MCF 10A (cell line): ENCODE measurements at regions of chr3 and their contacts with region 1.

Region 1: GRCh38 chr3:2921903-2922302 is 188.3 kb downstream of the IL5RA start:
- DNase-seq: peak; percentile 41
- H3K4me3 Mint-ChIP-seq: no peak overlapping the region
- H3K27ac Mint-ChIP-seq: no peak overlapping the region
- H3K4me1 Mint-ChIP-seq: no peaks in the 10 kb centered on the region
- H3K27me3 Mint-ChIP-seq: peaks cover 67% of the 10 kb centered on the region
- CTCF ChIP-seq: peak; percentile 43

Region 2: DNA sequence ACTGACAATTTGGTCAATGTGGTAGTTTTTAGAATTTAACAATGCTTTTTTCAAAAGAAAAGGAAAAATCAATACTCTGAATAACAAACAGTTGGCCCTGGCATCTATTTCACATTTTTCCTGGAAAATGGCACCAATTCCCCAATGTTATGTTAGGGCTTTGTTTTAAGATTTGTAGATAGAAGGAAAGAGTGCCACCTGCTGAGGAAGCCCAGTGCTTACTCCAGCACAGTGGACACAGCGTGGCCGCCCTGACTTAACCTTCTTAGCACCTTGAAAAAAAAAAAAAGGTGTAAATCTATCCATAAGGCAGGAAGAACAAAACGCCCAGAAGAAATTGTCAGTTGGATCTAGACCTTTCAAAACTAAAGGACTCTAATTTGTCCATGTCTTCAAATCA is 933.9 kb before region 1 on chr3:
- CTCF ChIA-PET with region 1: no interaction called
- POLR2A ChIA-PET with region 1: no interaction called
- intact Hi-C with region 1: loop called (anchors 10 kb)
- DNase-seq: peak; percentile 22
- H3K4me3 Mint-ChIP-seq: no peak overlapping the region
- H3K27ac Mint-ChIP-seq: no peak overlapping the region
- H3K4me1 Mint-ChIP-seq: no peaks in the 10 kb centered on the region
- H3K27me3 Mint-ChIP-seq: no peaks in the 10 kb centered on the region
- CTCF ChIP-seq: peak; percentile 36